A673 (cell line): ENCODE measurements at regions of chr21 and their contacts with region 1.

Region 1: GRCh38 chr21:25722631-25723030 is 12.1 kb downstream of the ATP5PF start:
- DNase-seq: no peak
- H3K4me3 ChIP-seq: no peak overlapping the region
- H3K27ac ChIP-seq: no peak overlapping the region
- H3K4me1 ChIP-seq: no peaks in the 10 kb centered on the region
- H3K27me3 ChIP-seq: no peaks in the 10 kb centered on the region
- CTCF ChIP-seq: no peak

Region 2: GRCh38 chr21:25772686-25773085 is 50.1 kb after region 1 on chr21:
- CTCF ChIA-PET with region 1: no interaction called
- POLR2A ChIA-PET with region 1: interaction called, 13 read pairs
- intact Hi-C with region 1: no loop called
- DNase-seq: no peak
- H3K4me3 ChIP-seq: no peak overlapping the region
- H3K27ac ChIP-seq: no peak overlapping the region
- H3K4me1 ChIP-seq: no peaks in the 10 kb centered on the region
- H3K27me3 ChIP-seq: no peaks in the 10 kb centered on the region
- CTCF ChIP-seq: no peak